Caco-2 (cell line): ENCODE measurements at regions of chr3 and their contacts with region 1.

Region 1: GRCh38 chr3:27467545-27467944 is 16.6 kb downstream of the SLC4A7 start:
- DNase-seq: peak in 1 of 2 experiments; percentile 6
- H3K4me3 ChIP-seq: no peak overlapping the region
- H3K4me3 Mint-ChIP-seq: no peak overlapping the region
- H3K27ac Mint-ChIP-seq: no peak overlapping the region
- H3K4me1 ChIP-seq: no peaks in the 10 kb centered on the region
- H3K4me1 Mint-ChIP-seq: no peaks in the 10 kb centered on the region
- H3K27me3 ChIP-seq: no peaks in the 10 kb centered on the region
- H3K27me3 Mint-ChIP-seq: no peaks in the 10 kb centered on the region
- CTCF ChIP-seq: peak; percentile 36 to 49

Region 2: GRCh38 chr3:27134165-27134796 is 333.3 kb before region 1 on chr3:
- CTCF ChIA-PET with region 1: no interaction called
- POLR2A ChIA-PET with region 1: no interaction called
- intact Hi-C with region 1: loop called (anchors 1 kb)
- DNase-seq: peak; percentile 58 to 69
- H3K4me3 ChIP-seq: no peak overlapping the region
- H3K4me3 Mint-ChIP-seq: no peak overlapping the region
- H3K27ac Mint-ChIP-seq: no peak overlapping the region
- H3K4me1 ChIP-seq: peaks cover 11% of the 10 kb centered on the region
- H3K4me1 Mint-ChIP-seq: peaks cover 9% of the 10 kb centered on the region
- H3K27me3 ChIP-seq: no peaks in the 10 kb centered on the region
- H3K27me3 Mint-ChIP-seq: no peaks in the 10 kb centered on the region
- CTCF ChIP-seq: peak; percentile 70 to 80

Region 3: GRCh38 chr3:27312044-27312668 is 155.4 kb before region 1 on chr3:
- CTCF ChIA-PET with region 1: no interaction called
- POLR2A ChIA-PET with region 1: no interaction called
- intact Hi-C with region 1: loop called (anchors 1 kb)
- DNase-seq: peak in 1 of 2 experiments; percentile 59
- H3K4me3 ChIP-seq: no peak overlapping the region
- H3K4me3 Mint-ChIP-seq: no peak overlapping the region
- H3K27ac Mint-ChIP-seq: no peak overlapping the region
- H3K4me1 ChIP-seq: peaks cover 3% of the 10 kb centered on the region; the same call in 1 of the 2 replicates
- H3K4me1 Mint-ChIP-seq: peaks cover 8% of the 10 kb centered on the region
- H3K27me3 ChIP-seq: no peaks in the 10 kb centered on the region
- H3K27me3 Mint-ChIP-seq: peaks cover 2% of the 10 kb centered on the region
- CTCF ChIP-seq: peak; percentile 45 to 64

Region 4: DNA sequence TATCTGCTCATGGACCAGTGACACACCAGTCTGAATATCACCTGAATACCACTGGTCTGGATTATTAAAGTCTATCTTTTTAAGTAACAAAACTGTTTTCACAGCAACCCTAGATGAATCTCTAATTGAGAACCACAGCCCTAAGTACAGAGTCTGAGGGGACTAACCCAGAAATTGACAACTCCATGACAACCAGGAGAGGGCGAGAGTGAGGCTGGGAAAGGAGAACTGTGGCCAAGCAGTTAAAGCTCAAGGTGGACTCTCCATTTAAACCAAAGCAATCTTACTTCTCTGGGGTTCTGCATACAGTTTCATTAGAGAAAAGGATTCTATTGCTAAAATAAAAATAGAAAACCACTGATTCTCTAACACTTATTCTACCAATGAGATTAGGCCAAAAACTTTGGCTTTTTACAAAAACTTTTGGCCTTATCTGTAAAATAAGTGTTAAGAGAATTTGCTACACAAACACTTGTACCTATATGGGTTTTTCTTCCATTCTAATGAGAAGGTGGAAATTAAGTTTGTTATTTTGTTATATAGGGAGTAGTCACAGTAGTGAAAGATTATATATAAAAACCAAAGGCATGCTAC is 109.8 kb before region 1 on chr3:
- CTCF ChIA-PET with region 1: interaction called, 4 read pairs
- POLR2A ChIA-PET with region 1: no interaction called
- intact Hi-C with region 1: loop called (anchors 1 kb)
- DNase-seq: peak; percentile 49 to 64
- H3K4me3 ChIP-seq: no peak overlapping the region
- H3K4me3 Mint-ChIP-seq: no peak overlapping the region
- H3K27ac Mint-ChIP-seq: no peak overlapping the region
- H3K4me1 ChIP-seq: no peaks in the 10 kb centered on the region
- H3K4me1 Mint-ChIP-seq: no peaks in the 10 kb centered on the region
- H3K27me3 ChIP-seq: no peaks in the 10 kb centered on the region
- H3K27me3 Mint-ChIP-seq: peaks cover 10% of the 10 kb centered on the region
- CTCF ChIP-seq: peak in 1 of 2 experiments; percentile 73

Region 5: GRCh38 chr3:27746838-27747237 is 279.3 kb after region 1 on chr3:
- CTCF ChIA-PET with region 1: no interaction called
- POLR2A ChIA-PET with region 1: no interaction called
- intact Hi-C with region 1: no loop called
- DNase-seq: no peak
- H3K4me3 ChIP-seq: no peak overlapping the region
- H3K4me3 Mint-ChIP-seq: no peak overlapping the region
- H3K27ac Mint-ChIP-seq: no peak overlapping the region
- H3K4me1 ChIP-seq: no peaks in the 10 kb centered on the region
- H3K4me1 Mint-ChIP-seq: no peaks in the 10 kb centered on the region
- H3K27me3 ChIP-seq: no peaks in the 10 kb centered on the region
- H3K27me3 Mint-ChIP-seq: peaks cover 9% of the 10 kb centered on the region
- CTCF ChIP-seq: no peak